WTC11 (cell line): ENCODE measurements at regions of chr20 and their contacts with region 1.

Region 1: DNA sequence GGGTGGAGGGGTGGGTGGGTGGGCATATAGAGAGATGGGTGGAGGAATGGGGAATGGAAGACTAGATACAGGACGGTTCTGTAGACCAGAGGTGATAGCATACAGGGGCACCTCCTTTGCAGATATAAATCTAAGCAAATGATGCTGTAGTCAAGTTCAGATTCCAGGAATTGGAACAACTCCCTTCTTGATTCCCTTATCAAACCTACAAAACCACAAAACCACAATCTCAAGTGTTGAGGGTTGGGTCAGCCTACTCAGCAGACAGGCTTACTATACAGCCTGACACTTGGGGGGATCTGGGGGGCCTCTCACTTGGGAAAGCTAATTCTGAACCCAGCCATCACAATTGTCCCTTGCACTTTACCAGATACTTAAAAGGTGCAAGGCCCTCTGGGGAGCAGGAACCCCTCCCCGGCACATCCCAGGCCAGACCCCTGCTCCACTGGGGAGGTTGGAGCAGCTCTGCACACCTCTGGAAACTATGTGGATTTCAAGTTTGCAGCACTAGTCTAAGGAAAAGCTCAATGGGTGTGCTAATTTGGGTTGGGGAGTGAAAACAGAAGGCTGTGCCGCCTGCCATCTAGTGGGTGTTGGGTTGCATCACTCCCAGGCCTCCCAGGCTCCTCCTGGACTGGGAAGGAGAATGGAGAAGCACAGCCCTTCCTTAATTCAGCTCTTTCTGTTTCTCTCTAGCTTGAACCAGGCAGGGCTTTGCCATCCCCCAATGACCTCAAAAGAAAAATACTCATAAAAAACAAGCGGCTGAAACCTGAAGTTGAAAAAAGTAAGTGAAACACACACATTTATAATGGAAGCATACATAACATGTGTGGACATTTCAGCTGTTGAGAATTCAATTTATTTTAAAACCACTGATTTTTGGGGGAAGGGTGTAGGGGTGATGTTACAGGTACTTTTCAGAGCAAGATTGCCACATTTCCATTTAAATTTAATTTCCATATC is 121.2 kb upstream of the LAMP5 start:
- DNase-seq: peak; percentile 79
- ATAC-seq: peak; percentile 99
- H3K4me3 Mint-ChIP-seq: no peak overlapping the region
- H3K27ac Mint-ChIP-seq: no peak overlapping the region
- H3K4me1 Mint-ChIP-seq: peaks cover 18% of the 10 kb centered on the region
- H3K27me3 Mint-ChIP-seq: no peaks in the 10 kb centered on the region; the same call in 1 of the 2 replicates
- CTCF ChIP-seq: no peak; the same call in 1 of the 2 replicates

Region 2: DNA sequence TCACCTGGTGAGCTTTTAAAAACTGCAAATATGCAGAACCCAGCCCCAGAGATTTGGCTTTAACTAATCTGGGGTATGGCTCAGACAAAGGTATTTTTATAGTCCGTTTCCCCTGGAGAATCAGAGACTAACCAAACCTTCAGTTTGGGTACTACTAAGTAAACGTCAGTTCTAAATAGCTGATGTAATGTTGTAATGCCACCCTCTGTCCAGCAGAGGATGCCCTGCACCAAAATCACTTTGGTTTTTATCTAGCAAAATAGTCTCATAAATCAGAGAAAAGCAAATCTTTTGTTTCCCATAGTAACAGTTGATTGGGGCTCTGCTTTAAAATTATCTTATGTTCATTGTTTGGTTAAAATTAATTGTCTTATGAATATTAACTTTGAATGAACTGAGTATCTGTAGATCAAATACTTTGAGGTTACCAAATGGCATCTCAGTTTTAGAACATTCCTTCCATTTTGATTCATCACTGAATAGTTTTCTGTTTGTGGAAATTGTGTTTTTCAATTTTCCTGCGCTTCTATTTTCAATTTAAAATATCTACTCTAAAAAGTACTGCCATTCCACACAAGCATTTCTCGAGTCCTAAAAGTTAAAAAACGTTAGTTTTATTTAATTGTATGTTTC is 602.6 kb before region 1 on chr20:
- CTCF ChIA-PET with region 1: interaction called, 23 read pairs
- POLR2A ChIA-PET with region 1: no interaction called
- DNase-seq: peak; percentile 42
- ATAC-seq: peak; percentile 60; the same call in 1 of the 2 replicates
- H3K4me3 Mint-ChIP-seq: no peak overlapping the region
- H3K27ac Mint-ChIP-seq: no peak overlapping the region
- H3K4me1 Mint-ChIP-seq: peaks cover 19% of the 10 kb centered on the region
- H3K27me3 Mint-ChIP-seq: peaks cover 5% of the 10 kb centered on the region; the same call in 1 of the 2 replicates
- CTCF ChIP-seq: peak; percentile 98

Region 3: GRCh38 chr20:8853805-8854338 is 539.3 kb before region 1 on chr20:
- CTCF ChIA-PET with region 1: interaction called, 37 read pairs
- POLR2A ChIA-PET with region 1: no interaction called
- DNase-seq: no peak
- ATAC-seq: peak; percentile 89
- H3K4me3 Mint-ChIP-seq: no peak overlapping the region
- H3K27ac Mint-ChIP-seq: no peak overlapping the region
- H3K4me1 Mint-ChIP-seq: no peaks in the 10 kb centered on the region; the same call in 1 of the 2 replicates
- H3K27me3 Mint-ChIP-seq: no peaks in the 10 kb centered on the region
- CTCF ChIP-seq: peak; percentile 80

Region 4: DNA sequence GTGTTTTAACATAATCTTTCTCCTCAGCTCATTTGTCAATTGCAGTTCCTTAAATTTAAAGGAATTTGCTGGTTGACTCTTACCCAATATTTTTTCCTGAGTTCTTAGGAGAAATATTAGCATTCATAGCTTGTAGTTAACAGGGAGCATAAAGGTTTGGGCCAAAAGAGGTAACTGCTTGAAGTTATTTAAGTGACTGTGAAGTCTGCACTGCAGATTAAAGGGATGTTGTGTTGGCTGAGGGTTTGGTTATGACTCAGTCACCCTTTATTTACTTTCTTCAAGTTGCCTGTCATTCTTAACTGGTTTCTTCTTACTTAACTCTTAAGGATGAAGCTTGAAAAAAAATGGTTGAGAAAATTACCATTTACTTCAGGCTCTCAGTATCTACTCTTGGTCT is 99.1 kb before region 1 on chr20:
- CTCF ChIA-PET with region 1: no interaction called
- POLR2A ChIA-PET with region 1: no interaction called
- DNase-seq: no peak
- ATAC-seq: no peak
- H3K4me3 Mint-ChIP-seq: no peak overlapping the region
- H3K27ac Mint-ChIP-seq: no peak overlapping the region
- H3K4me1 Mint-ChIP-seq: no peaks in the 10 kb centered on the region
- H3K27me3 Mint-ChIP-seq: no peaks in the 10 kb centered on the region
- CTCF ChIP-seq: no peak

Region 5: GRCh38 chr20:9369557-9369956 is 23.6 kb before region 1 on chr20:
- CTCF ChIA-PET with region 1: interaction called, 12 read pairs
- POLR2A ChIA-PET with region 1: no interaction called
- DNase-seq: no peak
- ATAC-seq: no peak
- H3K4me3 Mint-ChIP-seq: no peak overlapping the region
- H3K27ac Mint-ChIP-seq: no peak overlapping the region; the same call in 1 of the 2 replicates
- H3K4me1 Mint-ChIP-seq: peaks cover 24% of the 10 kb centered on the region
- H3K27me3 Mint-ChIP-seq: no peaks in the 10 kb centered on the region
- CTCF ChIP-seq: no peak

Region 6: GRCh38 chr20:9407805-9408421 is 14.7 kb after region 1 on chr20:
- CTCF ChIA-PET with region 1: interaction called, 19 read pairs
- POLR2A ChIA-PET with region 1: no interaction called
- DNase-seq: peak; percentile 73
- ATAC-seq: peak; percentile 91
- H3K4me3 Mint-ChIP-seq: no peak overlapping the region
- H3K27ac Mint-ChIP-seq: no peak overlapping the region
- H3K4me1 Mint-ChIP-seq: no peaks in the 10 kb centered on the region
- H3K27me3 Mint-ChIP-seq: no peaks in the 10 kb centered on the region
- CTCF ChIP-seq: peak; percentile 76